ENCODE measurements at regions of chr9 and their contacts with region 1.

Region 1: DNA sequence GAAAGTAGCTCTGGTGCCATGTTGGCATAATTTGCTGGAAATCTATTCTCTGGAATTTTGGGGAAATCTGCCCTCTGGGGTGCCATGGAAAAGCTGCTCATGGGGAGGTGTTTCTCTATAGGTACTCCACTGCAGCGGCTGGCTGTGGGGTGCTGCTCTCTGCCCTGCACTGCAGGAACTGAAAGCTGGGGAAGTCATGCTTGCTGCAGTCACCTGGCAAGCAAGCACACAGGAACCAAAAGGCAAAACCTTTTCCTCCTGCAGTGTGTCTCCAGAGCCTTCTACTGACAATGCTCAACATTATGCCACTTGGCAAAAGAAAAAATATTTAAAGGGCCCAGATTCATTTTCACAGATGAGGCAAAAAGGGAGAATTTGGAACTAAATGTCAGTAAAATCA is 25.8 kb upstream of the CARNMT1 start:
- DNase-seq: peak; percentile 86
- H3K4me3 ChIP-seq: no peak overlapping the region
- H3K27ac ChIP-seq: peak overlapping the region; percentile 43
- H3K4me1 ChIP-seq: peaks cover 24% of the 10 kb centered on the region
- CTCF ChIP-seq: no peak

Region 2: GRCh38 chr9:74940600-74940999 is 113.3 kb before region 1 on chr9:
- CTCF ChIA-PET with region 1: no interaction called
- POLR2A ChIA-PET with region 1: no interaction called
- intact Hi-C with region 1: no loop called
- DNase-seq: no peak
- H3K4me3 ChIP-seq: no peak overlapping the region
- H3K27ac ChIP-seq: no peak overlapping the region
- H3K4me1 ChIP-seq: no peaks in the 10 kb centered on the region
- CTCF ChIP-seq: no peak

Region 3: DNA sequence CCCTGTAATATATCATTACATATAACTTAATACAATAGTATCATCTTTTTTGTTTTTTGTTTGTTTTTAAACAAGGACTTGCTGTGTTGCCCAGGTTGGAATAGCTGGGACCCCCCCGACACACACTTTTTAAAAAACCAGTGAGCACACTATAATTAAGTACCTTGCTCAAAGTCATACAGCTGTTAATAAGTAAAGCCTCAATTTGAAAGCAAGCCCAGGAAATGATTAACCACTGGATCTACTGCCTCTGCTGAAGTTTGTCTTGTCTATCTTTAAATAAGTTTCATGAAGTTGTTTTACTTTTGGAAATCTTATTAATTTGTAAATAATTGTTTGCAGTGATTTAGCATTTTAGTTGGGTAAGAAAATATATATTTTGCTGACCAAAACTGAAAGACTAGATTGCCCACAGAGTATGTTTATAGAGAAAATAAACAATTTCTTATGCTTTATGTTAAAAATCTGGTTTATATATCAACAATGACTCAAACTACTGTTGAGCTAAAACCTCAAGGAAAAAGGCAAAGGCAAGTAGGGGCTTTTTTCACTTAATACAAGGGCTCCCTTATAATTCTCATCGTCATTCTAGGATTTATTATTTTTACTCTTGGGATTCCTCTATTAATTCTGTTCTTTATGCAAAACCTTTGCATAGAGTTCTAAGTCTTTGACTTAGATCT is 19.9 kb before region 1 on chr9:
- CTCF ChIA-PET with region 1: no interaction called
- POLR2A ChIA-PET with region 1: interaction called, 17 read pairs
- intact Hi-C with region 1: no loop called
- DNase-seq: no peak
- H3K4me3 ChIP-seq: no peak overlapping the region
- H3K27ac ChIP-seq: no peak overlapping the region
- H3K4me1 ChIP-seq: peaks cover 1% of the 10 kb centered on the region
- CTCF ChIP-seq: no peak

Region 4: GRCh38 chr9:75064307-75065025 is 10.6 kb after region 1 on chr9:
- CTCF ChIA-PET with region 1: no interaction called
- POLR2A ChIA-PET with region 1: interaction called, 14 read pairs
- intact Hi-C with region 1: no loop called
- DNase-seq: no peak
- H3K4me3 ChIP-seq: no peak overlapping the region
- H3K27ac ChIP-seq: no peak overlapping the region
- H3K4me1 ChIP-seq: peaks cover 6% of the 10 kb centered on the region
- CTCF ChIP-seq: no peak

Region 5: DNA sequence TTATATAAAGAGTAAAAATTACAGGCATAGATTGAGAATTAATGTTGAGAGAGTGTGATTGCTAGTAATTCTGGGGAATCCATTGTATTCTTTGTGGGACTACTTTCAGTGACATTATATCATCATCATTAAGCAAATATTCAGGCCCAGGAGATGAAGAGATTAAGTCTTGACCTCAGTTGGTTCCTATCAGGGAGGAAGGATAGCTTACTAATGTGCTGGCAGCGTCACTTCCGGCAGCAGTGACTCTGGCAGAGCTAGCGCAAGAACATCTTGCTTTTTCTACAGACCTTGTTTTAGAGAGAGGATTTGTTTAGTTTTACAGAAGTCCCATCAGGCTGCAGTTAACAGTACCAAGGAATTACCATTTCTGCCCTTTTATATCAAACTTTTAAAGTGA is 54.7 kb after region 1 on chr9:
- CTCF ChIA-PET with region 1: no interaction called
- POLR2A ChIA-PET with region 1: no interaction called
- intact Hi-C with region 1: no loop called
- DNase-seq: no peak
- H3K4me3 ChIP-seq: no peak overlapping the region
- H3K27ac ChIP-seq: no peak overlapping the region
- H3K4me1 ChIP-seq: no peaks in the 10 kb centered on the region
- CTCF ChIP-seq: no peak

Region 6: DNA sequence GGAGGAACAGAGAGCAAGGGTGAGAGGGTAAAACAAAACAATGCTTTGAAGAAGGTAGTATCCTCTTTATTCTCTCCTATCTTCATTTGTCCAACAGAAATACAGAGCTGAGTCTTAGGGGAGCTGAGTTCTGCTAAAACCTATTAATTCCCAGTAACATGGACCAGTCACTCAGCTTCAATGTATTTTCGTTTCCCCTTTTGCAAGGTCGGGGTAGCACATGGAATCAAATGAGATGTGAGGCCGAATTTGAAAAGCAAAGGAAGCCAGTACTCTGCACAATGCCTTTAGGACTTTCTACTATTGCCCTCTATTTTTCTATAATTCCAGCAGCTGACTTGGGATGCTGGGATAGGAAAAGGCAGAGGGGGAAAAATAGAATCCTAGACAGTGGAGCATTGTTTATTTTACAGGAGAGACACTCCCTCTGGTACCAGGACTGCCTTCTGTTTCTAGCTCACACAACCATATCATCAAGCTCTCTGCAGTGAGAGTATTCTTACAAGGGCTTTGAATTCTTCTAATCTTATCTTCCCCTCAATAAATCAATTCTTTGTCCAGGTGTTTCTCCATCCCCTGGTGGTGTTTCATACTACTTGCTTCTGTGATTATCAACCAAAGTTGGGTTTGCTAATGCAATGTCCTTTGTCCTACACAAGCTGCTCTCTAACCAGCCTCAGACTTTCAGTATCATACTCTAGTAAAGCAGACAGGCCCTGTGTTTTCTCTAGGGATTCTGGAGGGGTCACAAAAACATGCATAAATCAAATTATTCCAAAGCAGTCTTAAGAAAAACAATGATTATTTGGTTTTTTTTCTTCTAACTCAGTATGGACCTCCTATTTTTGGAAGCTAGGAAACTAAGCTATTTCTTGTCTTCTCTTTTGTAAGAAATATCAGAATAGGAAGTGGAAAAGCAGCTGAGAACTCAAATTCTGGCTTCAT is 375.9 kb after region 1 on chr9:
- CTCF ChIA-PET with region 1: no interaction called
- POLR2A ChIA-PET with region 1: no interaction called
- intact Hi-C with region 1: no loop called
- DNase-seq: peak; percentile 13
- H3K4me3 ChIP-seq: no peak overlapping the region
- H3K27ac ChIP-seq: no peak overlapping the region
- H3K4me1 ChIP-seq: no peaks in the 10 kb centered on the region
- CTCF ChIP-seq: no peak